Panc1 (cell line): ENCODE measurements at regions of chr7 and their contacts with region 1.

Region 1: GRCh38 chr7:73595358-73595757 is 17.0 kb upstream of the TBL2 start:
- DNase-seq: no peak
- ATAC-seq: no peak
- H3K4me3 ChIP-seq: no peak overlapping the region
- H3K27ac ChIP-seq: no peak overlapping the region
- H3K4me1 ChIP-seq: no peaks in the 10 kb centered on the region
- H3K27me3 ChIP-seq: no peaks in the 10 kb centered on the region
- CTCF ChIP-seq: no peak

Region 2: GRCh38 chr7:73612598-73613269 is 17.4 kb after region 1 on chr7:
- CTCF ChIA-PET with region 1: interaction called, 10 read pairs
- POLR2A ChIA-PET with region 1: no interaction called
- in situ Hi-C with region 1: no loop called
- intact Hi-C with region 1: no loop called
- DNase-seq: no peak
- ATAC-seq: peak; percentile 80
- H3K4me3 ChIP-seq: no peak overlapping the region
- H3K27ac ChIP-seq: no peak overlapping the region
- H3K4me1 ChIP-seq: peaks cover 10% of the 10 kb centered on the region
- H3K27me3 ChIP-seq: no peaks in the 10 kb centered on the region
- CTCF ChIP-seq: no peak; the same call in 1 of the 2 replicates

Region 3: DNA sequence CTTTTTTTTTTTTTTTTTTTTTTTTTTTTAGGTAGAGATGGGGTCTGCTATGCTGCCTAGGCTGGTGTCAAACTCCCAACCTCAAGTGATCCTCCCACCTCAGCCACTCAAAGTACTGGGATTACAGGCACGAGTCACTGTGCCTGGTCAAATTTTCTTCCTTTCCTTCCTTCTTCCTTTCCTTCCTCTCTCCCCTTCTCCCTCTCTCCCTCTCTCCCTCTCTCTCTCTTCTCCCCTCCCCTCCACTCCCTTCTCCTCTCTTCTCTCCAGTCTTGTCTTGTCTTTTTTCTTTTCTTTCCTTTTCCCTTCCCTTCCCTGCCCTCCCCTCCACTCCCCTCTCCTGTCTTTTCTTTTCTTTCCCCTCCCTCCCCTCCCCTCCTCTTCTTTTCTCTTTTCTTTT is 36.2 kb after region 1 on chr7:
- CTCF ChIA-PET with region 1: no interaction called
- POLR2A ChIA-PET with region 1: no interaction called
- in situ Hi-C with region 1: no loop called
- intact Hi-C with region 1: no loop called
- DNase-seq: no peak
- ATAC-seq: no peak
- H3K4me3 ChIP-seq: no peak overlapping the region
- H3K27ac ChIP-seq: no peak overlapping the region
- H3K4me1 ChIP-seq: peaks cover 3% of the 10 kb centered on the region; the same call in 1 of the 2 replicates
- H3K27me3 ChIP-seq: no peaks in the 10 kb centered on the region
- CTCF ChIP-seq: no peak